Activated CD4-positive, alpha-beta T cell treated with anti-CD3 and anti-CD28 coated beads for 36 hours (primary cell): ENCODE measurements at regions of chr10 and their contacts with region 1.

Region 1: GRCh38 chr10:34163075-34163905 is 651.8 kb downstream of the PARD3 start:
- DNase-seq: no peak
- ATAC-seq: no peak
- H3K4me3 Mint-ChIP-seq: no peak overlapping the region
- H3K27ac Mint-ChIP-seq: no peak overlapping the region
- H3K4me1 Mint-ChIP-seq: no peaks in the 10 kb centered on the region
- H3K27me3 Mint-ChIP-seq: peaks cover 2% of the 10 kb centered on the region

Region 2: GRCh38 chr10:34181553-34182300 is 18.4 kb after region 1 on chr10:
- CTCF ChIA-PET with region 1: no interaction called
- POLR2A ChIA-PET with region 1: no interaction called
- intact Hi-C with region 1: loop called in 1 of 2 experiments (anchors 2 kb)
- DNase-seq: no peak
- ATAC-seq: no peak
- H3K4me3 Mint-ChIP-seq: no peak overlapping the region
- H3K27ac Mint-ChIP-seq: no peak overlapping the region
- H3K4me1 Mint-ChIP-seq: no peaks in the 10 kb centered on the region
- H3K27me3 Mint-ChIP-seq: peaks cover 1% of the 10 kb centered on the region

Region 3: DNA sequence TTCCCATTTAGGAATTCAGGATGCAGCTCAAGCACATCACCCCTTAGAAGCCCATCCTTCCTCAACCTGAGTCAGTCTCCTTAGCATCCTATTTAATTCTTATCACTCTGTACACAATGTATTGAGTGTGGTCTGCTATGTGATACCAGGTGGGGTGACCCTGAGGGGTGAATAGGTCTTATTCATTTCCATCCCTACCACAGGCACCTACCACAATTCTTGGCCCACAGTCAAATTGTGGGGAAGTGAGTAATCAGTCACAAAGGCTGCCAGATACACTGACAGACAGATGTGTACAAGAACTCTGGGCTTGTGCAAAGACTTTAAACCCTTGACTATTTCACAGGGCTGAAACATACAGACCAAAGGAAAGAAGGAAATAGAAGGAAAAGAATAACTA is 91.3 kb after region 1 on chr10:
- CTCF ChIA-PET with region 1: no interaction called
- POLR2A ChIA-PET with region 1: no interaction called
- intact Hi-C with region 1: no loop called
- DNase-seq: peak; percentile 54
- ATAC-seq: peak; percentile 87
- H3K4me3 Mint-ChIP-seq: no peak overlapping the region
- H3K27ac Mint-ChIP-seq: no peak overlapping the region
- H3K4me1 Mint-ChIP-seq: no peaks in the 10 kb centered on the region
- H3K27me3 Mint-ChIP-seq: peaks cover 5% of the 10 kb centered on the region